HepG2 (cell line): ENCODE measurements at regions of chr6 and their contacts with region 1.

Region 1: DNA sequence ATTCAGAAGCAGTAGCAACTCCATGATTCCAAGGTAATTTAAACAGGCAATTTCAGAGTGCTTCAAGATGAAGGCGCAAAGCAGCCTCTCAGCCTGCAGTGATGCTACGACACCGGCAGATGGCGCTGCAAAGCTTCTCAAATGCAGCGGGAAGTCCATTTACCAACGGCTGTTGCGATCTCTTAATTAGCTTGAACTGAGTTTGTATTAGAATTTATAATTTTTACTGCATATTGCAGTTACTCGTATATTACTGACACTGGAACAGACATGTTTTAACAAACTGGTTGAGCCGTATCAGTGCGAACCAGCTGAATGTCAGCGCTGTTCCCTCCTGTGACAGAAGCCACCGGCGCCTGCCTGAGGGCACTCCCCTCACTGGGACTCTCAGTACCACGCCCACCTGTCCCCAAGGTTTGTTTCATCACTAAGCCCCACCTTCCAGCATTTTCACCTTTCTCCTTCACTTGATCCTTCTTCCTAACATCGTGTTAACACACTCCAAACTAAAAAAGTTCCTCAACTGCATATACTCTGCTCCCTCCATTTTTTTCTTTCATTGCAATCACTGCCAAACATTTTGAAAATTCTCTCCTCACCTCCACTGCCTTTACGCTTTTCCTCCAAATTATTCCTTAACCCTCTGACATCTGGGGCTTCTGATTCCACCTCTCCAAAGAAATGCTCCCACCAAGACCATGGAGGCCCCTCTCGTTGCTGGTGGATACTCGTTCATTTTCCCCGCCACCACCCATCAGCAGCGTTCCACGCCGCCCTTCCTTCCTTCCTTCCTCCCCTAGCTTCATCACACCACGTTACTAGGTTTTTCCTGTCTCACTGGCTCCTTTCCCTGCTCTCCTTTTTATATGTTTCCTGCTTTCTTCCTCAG is 14.5 kb downstream of the GNL1 start:
- DNase-seq: peak; percentile 76
- ATAC-seq: peak; percentile 88
- H3K4me3 ChIP-seq: peak overlapping the region; percentile 30 to 66 (median 44); a peak in 5 of 6 replicates
- H3K27ac ChIP-seq: no peak overlapping the region
- H3K4me1 ChIP-seq: peaks cover 7% of the 10 kb centered on the region; the same call in 1 of the 2 replicates
- H3K27me3 ChIP-seq: no peaks in the 10 kb centered on the region
- CTCF ChIP-seq: peak; percentile 94
- EP300 ChIP-seq: no peak
- POLR2A ChIP-seq: no peak
- RAD21 ChIP-seq: peak; percentile 78

Region 2: DNA sequence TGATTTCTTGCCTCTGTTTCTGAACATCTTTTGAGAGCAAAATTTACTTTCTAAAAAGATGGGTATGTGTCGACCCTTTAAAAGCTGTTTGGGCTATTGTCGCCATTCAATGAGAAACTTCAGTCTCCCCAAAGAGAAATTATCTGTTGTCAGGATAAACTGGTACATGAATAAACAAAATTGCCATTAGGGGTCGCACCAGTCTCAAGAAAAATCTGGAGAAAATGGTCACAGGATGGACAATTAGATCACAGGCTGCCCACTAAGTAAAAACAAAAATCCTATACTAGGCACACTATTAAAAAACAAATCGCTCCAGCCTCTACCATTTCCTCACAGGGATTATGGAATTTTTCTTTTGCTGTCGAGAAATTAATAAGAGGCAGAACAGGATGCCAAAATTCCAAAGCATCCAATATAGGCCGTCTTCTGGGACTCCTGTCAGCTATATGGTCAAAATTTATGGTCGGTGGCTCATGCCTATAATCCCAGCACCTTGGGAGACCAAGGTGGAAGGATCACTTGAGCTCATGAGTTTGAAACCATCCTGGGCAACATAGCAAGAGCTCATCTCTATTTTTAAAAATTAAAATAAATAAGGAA is 58.0 kb before region 1 on chr6:
- CTCF ChIA-PET with region 1: interaction called, 110 read pairs
- POLR2A ChIA-PET with region 1: interaction called, 9 read pairs
- in situ Hi-C with region 1: loop called (anchors 5 kb)
- intact Hi-C with region 1: loop called (anchors 1 kb)
- DNase-seq: peak; percentile 66
- ATAC-seq: no peak
- H3K4me3 ChIP-seq: no peak overlapping the region
- H3K27ac ChIP-seq: no peak overlapping the region
- H3K4me1 ChIP-seq: peaks cover 26% of the 10 kb centered on the region
- H3K27me3 ChIP-seq: peaks cover 0 to 29% of the 10 kb centered on the region in 2 experiments; a peak in 3 of 5 replicates
- CTCF ChIP-seq: peak; percentile 81
- EP300 ChIP-seq: no peak
- POLR2A ChIP-seq: no peak
- RAD21 ChIP-seq: peak; percentile 58; the same call in 1 of the 2 replicates

Region 3: DNA sequence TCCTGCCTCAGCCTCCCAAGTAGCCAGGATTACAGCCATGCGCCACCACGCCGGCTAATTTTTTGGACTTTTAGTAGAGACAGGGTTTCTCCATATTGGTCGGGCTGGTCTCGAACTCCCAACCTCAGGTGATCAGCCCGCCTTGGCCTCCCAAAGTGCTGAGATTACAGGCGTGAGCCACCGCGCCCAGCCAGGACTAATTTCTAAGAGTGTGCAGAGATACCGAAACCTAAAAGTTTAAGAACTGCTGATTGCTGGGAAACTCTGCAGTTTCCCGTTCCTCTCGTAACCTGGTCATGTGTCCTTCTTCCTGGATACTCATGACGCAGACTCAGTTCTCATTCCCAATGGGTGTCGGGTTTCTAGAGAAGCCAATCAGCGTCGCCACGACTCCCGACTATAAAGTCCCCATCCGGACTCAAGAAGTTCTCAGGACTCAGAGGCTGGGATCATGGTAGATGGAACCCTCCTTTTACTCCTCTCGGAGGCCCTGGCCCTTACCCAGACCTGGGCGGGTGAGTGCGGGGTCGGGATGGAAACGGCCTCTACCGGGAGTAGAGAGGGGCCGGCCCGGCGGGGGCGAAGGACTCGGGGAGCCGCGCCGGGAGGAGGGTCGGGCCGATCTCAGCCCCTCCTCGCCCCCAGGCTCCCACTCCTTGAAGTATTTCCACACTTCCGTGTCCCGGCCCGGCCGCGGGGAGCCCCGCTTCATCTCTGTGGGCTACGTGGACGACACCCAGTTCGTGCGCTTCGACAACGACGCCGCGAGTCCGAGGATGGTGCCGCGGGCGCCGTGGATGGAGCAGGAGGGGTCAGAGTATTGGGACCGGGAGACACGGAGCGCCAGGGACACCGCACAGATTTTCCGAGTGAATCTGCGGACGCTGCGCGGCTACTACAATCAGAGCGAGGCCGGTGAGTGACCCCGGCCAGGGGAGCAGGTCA is 52.4 kb before region 1 on chr6 and contains the start of gene HLA-E:
- CTCF ChIA-PET with region 1: interaction called, 110 read pairs
- POLR2A ChIA-PET with region 1: interaction called, 3 read pairs
- in situ Hi-C with region 1: loop called (anchors 5 kb)
- intact Hi-C with region 1: loop called (anchors 1 kb)
- DNase-seq: peak; percentile 99
- ATAC-seq: peak; percentile 97
- H3K4me3 ChIP-seq: peak within 1 kb of the TSS; percentile 74 to 97 (median 80)
- H3K27ac ChIP-seq: peak within 1 kb of the TSS; percentile 41
- H3K4me1 ChIP-seq: peaks cover 25% of the 10 kb centered on the region
- H3K27me3 ChIP-seq: no peaks in the 10 kb centered on the region
- CTCF ChIP-seq: peak; percentile 13; the same call in 1 of the 2 replicates
- EP300 ChIP-seq: no peak
- POLR2A ChIP-seq: peak; percentile 93 to 97
- RAD21 ChIP-seq: 0 out of 2 replicates have a peak, but pooled peaks have one; percentile 10
- total RNA-seq, gene HLA-E: 21.2 and 45.2 TPM in 2 replicates

Region 4: DNA sequence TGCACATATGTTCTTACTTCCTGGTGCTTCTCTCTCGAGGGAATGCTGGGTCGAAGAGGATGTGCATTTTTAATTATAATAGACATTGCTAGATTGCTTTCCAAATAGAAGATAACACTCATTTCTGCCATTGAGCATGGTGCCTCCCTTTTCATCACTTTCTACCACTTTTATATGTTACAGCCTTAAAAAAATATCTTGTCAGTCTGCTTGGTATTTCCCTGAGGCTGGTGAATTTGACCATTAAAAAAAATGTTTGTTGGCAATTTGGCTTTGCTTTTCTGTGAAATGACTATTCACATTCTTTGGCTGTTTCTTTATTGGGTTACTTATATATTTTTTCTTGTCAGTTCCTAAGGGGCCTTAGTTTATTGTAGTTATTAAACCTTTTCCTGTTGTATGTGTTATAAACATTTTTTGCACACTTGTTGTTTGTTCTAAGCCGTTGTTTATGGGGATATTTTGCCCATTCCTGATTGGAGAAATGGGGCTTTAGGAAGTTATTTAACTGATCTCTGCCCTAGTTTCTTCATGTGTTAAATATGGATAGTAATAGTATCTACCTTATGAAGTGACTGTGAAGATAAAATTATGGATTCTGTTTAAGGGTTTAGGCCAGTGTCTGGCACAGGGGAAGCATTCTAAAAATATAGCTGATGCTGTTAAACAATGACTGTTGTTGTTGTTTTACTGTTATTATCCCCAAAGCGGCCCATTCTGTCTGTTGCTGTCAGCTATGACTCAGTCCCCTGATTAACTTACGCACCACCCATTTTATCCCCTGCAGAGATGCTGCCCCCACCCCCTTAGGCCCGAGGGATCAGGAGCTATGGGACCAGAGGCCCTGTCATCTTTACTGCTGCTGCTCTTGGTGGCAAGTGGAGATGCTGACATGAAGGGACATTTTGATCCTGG is 346.4 kb after region 1 on chr6:
- CTCF ChIA-PET with region 1: no interaction called
- POLR2A ChIA-PET with region 1: no interaction called
- in situ Hi-C with region 1: no loop called
- intact Hi-C with region 1: no loop called
- DNase-seq: no peak
- ATAC-seq: no peak
- H3K4me3 ChIP-seq: no peak overlapping the region
- H3K27ac ChIP-seq: no peak overlapping the region
- H3K4me1 ChIP-seq: peaks cover 29% of the 10 kb centered on the region
- H3K27me3 ChIP-seq: no peaks in the 10 kb centered on the region; a peak in 1 of 5 replicates
- CTCF ChIP-seq: no peak
- EP300 ChIP-seq: no peak
- POLR2A ChIP-seq: no peak
- RAD21 ChIP-seq: no peak